B cell (primary cell): ENCODE measurements at regions of chr9 and their contacts with region 1.

Region 1: DNA sequence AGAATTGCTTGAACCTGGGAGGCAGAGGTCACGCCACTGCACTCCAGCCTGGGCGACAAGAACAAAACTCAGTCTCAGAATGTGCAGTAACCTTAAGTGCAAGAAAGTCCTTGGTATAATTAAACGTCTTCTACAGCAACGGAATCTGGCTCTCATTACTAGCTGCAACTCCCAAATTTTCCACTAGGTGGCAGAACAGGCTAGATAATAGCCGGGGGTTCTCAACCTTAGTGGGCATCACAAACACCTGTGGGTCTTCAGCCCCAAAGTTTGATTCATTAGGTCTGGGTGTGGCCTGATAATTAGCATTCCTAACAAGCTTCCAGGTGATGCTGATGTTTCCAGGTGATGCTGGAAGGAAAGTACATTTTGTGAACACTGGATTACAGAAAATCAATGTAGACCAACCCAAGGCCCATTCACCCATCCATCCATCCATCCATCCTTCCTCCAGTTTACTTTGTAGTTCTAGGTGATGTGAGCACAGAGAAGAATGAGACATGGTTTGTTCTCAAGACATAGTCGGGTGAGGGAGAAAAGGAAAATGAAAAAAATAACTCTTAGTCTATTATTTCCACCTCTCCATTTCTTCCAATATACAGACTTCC is 37.3 kb downstream of the FBXW2 start:
- DNase-seq: peak; percentile 80
- ATAC-seq: peak; percentile 82
- H3K4me3 ChIP-seq: no peak overlapping the region
- H3K4me3 Mint-ChIP-seq: no peak overlapping the region
- H3K27ac ChIP-seq: peak overlapping the region in 1 of 2 donors; percentile 68
- H3K27ac Mint-ChIP-seq: peak overlapping the region; percentile 21
- H3K4me1 ChIP-seq: peaks cover 5 to 13% of the 10 kb centered on the region in 2 donors
- H3K4me1 Mint-ChIP-seq: peaks cover 26% of the 10 kb centered on the region
- H3K27me3 ChIP-seq: no peaks in the 10 kb centered on the region
- H3K27me3 Mint-ChIP-seq: no peaks in the 10 kb centered on the region
- CTCF ChIP-seq: peak; percentile 94

Region 2: GRCh38 chr9:120767456-120768167 is 11.7 kb after region 1 on chr9:
- CTCF ChIA-PET with region 1: interaction called, 24 read pairs
- POLR2A ChIA-PET with region 1: no interaction called
- intact Hi-C with region 1: no loop called
- DNase-seq: no peak
- ATAC-seq: no peak
- H3K4me3 ChIP-seq: no peak overlapping the region
- H3K4me3 Mint-ChIP-seq: no peak overlapping the region
- H3K27ac ChIP-seq: no peak overlapping the region
- H3K27ac Mint-ChIP-seq: no peak overlapping the region
- H3K4me1 ChIP-seq: no peaks in the 10 kb centered on the region
- H3K4me1 Mint-ChIP-seq: no peaks in the 10 kb centered on the region
- H3K27me3 ChIP-seq: no peaks in the 10 kb centered on the region
- H3K27me3 Mint-ChIP-seq: no peaks in the 10 kb centered on the region
- CTCF ChIP-seq: no peak

Region 3: DNA sequence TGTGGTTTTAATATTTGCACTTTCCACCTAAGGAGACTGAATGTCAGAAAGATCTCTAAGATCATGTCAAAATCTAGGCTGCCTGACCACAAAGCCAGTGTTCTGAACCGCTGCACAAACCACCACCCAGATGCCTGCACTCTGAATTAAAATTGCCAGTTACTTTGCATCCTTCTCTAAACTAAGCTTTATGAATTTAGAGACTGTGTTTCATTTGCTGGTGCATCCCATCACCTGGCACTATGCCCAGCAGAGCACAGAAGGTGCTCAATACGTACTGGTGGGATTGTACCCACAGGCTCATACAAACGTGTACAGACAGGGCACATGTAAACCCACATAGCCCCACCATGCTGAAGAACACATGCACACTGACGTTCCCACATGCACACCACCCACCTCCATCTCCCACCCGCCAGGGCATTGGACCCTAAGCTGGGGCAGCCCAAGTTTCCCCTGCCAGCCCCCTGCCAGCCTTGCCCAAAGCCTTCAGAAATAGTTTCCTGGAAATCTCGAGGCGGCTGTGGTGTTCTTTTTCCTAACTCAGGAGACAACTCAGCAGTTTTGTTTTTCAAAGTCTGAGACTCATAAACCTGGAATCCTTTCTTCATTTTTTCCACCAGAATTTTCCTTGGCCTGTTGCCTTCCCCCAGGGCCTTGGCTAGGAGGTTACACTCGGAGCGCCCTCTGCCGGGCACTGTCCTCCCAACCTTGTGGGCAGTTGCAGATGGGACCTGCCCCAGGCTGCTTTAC is 180.3 kb after region 1 on chr9:
- CTCF ChIA-PET with region 1: interaction called, 34 read pairs
- POLR2A ChIA-PET with region 1: no interaction called
- intact Hi-C with region 1: loop called (anchors 1 kb)
- DNase-seq: peak; percentile 85
- ATAC-seq: peak; percentile 54
- H3K4me3 ChIP-seq: peak overlapping the region in 2 of 5 experiments; percentile 18 to 29
- H3K4me3 Mint-ChIP-seq: peak overlapping the region; percentile 61
- H3K27ac ChIP-seq: peak overlapping the region in 1 of 2 donors; percentile 55
- H3K27ac Mint-ChIP-seq: peak overlapping the region; percentile 44
- H3K4me1 ChIP-seq: peaks cover 58% of the 10 kb centered on the region in 2 donors
- H3K4me1 Mint-ChIP-seq: peaks cover 55% of the 10 kb centered on the region
- H3K27me3 ChIP-seq: no peaks in the 10 kb centered on the region
- H3K27me3 Mint-ChIP-seq: no peaks in the 10 kb centered on the region
- CTCF ChIP-seq: peak; percentile 88

Region 4: DNA sequence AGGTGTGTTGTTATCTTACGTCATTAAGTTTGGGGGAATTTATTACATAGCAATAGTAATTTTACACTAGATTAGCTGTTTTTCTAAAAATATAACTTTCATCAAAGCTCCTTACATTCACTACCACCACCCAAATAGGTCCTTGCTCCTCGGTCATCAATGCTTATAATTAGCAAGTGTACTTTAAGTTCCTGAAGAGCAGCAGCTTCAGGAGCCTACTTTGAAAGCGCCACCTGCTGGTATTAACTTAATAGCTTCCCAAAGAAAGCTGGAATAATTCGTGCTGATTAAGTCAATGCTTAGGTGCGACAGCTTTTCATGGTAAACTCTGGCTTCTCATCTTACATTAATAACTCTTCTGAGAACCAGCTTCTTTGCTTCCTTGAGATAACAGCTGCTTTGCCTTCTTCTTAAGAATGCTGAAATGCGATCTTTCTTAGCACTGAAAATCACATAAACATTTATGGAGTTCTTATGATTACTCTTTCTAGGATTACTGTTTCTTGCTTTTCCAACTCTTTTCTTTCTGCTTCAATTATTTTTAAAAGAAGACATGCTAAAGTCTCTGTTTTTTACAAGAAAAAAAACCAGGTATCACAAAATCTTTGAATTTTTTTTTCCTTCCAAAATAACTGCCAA is 304.2 kb after region 1 on chr9:
- CTCF ChIA-PET with region 1: interaction called, 173 read pairs
- POLR2A ChIA-PET with region 1: no interaction called
- intact Hi-C with region 1: loop called (anchors 1 kb)
- DNase-seq: peak; percentile 76
- ATAC-seq: peak; percentile 51
- H3K4me3 ChIP-seq: no peak overlapping the region
- H3K4me3 Mint-ChIP-seq: no peak overlapping the region
- H3K27ac ChIP-seq: no peak overlapping the region
- H3K27ac Mint-ChIP-seq: no peak overlapping the region
- H3K4me1 ChIP-seq: peaks cover 0 to 7% of the 10 kb centered on the region in 2 donors
- H3K4me1 Mint-ChIP-seq: peaks cover 6% of the 10 kb centered on the region
- H3K27me3 ChIP-seq: no peaks in the 10 kb centered on the region
- H3K27me3 Mint-ChIP-seq: no peaks in the 10 kb centered on the region
- CTCF ChIP-seq: peak; percentile 81

Region 5: DNA sequence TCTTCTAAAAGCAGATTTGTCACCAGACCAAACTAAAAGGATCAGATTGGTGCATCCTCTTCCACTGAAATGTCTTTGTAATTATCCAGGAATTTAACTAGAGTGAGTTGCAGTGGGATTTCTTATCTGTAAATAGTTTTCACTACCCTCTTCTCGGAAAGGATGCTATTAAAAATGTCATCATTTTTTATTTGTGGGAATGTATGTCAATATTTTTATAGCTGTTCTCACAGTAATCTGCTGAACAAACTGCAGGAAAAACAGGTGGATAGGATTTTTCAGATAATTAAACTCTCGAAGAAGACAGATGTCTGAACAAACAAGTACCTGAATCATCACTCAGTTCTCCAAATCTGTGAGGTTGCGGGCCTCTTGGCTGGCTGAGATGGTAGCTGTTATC is 383.0 kb after region 1 on chr9:
- CTCF ChIA-PET with region 1: no interaction called
- POLR2A ChIA-PET with region 1: interaction called, 15 read pairs
- intact Hi-C with region 1: no loop called
- DNase-seq: no peak
- ATAC-seq: no peak
- H3K4me3 ChIP-seq: no peak overlapping the region
- H3K4me3 Mint-ChIP-seq: no peak overlapping the region
- H3K27ac ChIP-seq: no peak overlapping the region
- H3K27ac Mint-ChIP-seq: no peak overlapping the region
- H3K4me1 ChIP-seq: no peaks in the 10 kb centered on the region
- H3K4me1 Mint-ChIP-seq: peaks cover 2% of the 10 kb centered on the region
- H3K27me3 ChIP-seq: no peaks in the 10 kb centered on the region
- H3K27me3 Mint-ChIP-seq: no peaks in the 10 kb centered on the region
- CTCF ChIP-seq: no peak

Region 6: DNA sequence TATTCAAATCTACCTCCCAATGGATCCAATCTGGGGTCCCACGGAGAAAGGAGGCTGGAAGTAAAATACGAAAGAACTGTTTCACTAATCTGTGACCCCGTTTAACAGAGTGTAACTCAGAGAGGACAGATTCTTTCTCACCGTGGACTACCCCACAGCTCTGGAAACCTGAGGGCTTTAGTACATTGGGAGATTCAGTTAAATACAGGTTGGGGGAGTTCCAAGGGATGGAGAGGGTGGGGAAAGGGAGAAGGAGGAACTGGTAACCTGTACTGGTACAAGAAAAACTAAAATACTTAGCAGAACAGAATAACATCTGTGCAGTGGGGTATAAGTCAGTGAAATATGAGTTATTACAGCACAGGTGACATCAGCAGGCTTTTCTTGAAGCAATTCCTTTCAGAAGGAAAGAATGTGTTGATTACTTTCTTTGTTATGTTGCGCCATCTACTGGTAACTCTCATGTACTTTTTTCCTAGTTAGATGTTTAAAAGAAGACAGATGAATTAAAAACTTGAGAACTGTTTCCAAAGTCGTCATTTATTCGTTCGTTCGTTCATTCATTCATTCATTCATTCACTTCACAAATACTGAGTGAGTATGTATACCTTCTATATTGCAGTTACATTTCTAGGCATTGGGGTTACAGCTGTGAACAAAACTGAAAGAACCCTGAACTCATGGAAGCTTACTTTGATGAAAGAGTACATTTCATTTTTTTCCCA is 644.1 kb after region 1 on chr9:
- CTCF ChIA-PET with region 1: interaction called, 22 read pairs
- POLR2A ChIA-PET with region 1: no interaction called
- intact Hi-C with region 1: no loop called
- DNase-seq: peak; percentile 75
- ATAC-seq: peak; percentile 41
- H3K4me3 ChIP-seq: no peak overlapping the region
- H3K4me3 Mint-ChIP-seq: no peak overlapping the region
- H3K27ac ChIP-seq: no peak overlapping the region
- H3K27ac Mint-ChIP-seq: no peak overlapping the region
- H3K4me1 ChIP-seq: no peaks in the 10 kb centered on the region
- H3K4me1 Mint-ChIP-seq: no peaks in the 10 kb centered on the region
- H3K27me3 ChIP-seq: no peaks in the 10 kb centered on the region
- H3K27me3 Mint-ChIP-seq: no peaks in the 10 kb centered on the region
- CTCF ChIP-seq: peak; percentile 91